Panc1 (cell line): ENCODE measurements at regions of chr9 and their contacts with region 1.

Region 1: GRCh38 chr9:37913480-37914153 is 9.7 kb upstream of the SLC25A51 start:
- DNase-seq: peak; percentile 70
- ATAC-seq: peak; percentile 75
- H3K4me3 ChIP-seq: no peak overlapping the region
- H3K27ac ChIP-seq: no peak overlapping the region; the same call in 1 of the 2 replicates
- H3K4me1 ChIP-seq: peaks cover 34% of the 10 kb centered on the region
- H3K27me3 ChIP-seq: no peaks in the 10 kb centered on the region
- CTCF ChIP-seq: peak; percentile 90

Region 2: DNA sequence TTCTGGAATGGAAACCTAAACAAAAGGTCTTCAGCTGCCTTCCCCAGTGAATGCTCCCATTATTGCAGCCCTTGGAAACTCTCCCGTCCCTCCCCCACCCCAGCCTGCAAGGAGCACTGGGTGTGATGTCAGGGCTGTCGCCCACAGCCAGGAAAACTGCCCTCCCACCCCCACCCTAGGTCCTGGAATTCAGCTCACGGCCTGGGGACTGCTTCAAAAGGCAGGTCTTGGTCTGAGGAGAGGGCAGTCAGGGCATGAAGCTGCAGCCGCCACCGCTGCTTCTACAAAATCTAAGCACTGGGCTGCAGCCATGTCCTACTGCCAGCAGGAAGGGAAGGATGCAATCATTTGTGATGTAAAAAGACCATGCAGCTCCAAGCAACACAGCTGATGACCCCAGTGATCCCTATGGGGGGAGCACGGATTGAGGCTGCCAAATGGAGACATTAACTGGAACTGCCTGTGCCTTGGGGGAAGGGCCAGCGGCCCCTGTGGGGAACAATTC is 479.7 kb before region 1 on chr9:
- CTCF ChIA-PET with region 1: no interaction called
- POLR2A ChIA-PET with region 1: no interaction called
- in situ Hi-C with region 1: no loop called
- intact Hi-C with region 1: no loop called
- DNase-seq: no peak
- ATAC-seq: no peak
- H3K4me3 ChIP-seq: no peak overlapping the region
- H3K27ac ChIP-seq: no peak overlapping the region
- H3K4me1 ChIP-seq: peaks cover 19% of the 10 kb centered on the region
- H3K27me3 ChIP-seq: no peaks in the 10 kb centered on the region
- CTCF ChIP-seq: no peak

Region 3: DNA sequence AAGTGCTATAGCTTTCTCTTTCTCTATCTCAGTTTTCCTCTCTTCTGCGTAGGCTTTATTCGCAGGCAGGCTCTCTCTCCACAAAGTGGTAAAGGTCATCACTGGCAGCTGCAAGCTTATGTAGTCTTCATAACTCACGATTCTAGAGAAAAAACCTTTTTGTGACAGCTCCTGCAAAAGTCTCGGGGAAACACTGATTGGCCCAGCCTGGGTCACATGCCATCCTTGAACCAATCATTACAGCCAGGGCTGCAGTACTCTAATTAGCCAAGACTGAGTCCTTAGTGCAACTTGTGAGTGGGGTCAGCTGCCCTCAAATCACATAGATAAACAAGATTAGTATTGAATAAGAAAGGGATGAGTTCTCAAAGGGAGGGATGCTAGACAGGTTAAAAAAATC is 281.1 kb before region 1 on chr9:
- CTCF ChIA-PET with region 1: no interaction called
- POLR2A ChIA-PET with region 1: no interaction called
- in situ Hi-C with region 1: no loop called
- intact Hi-C with region 1: no loop called
- DNase-seq: no peak
- ATAC-seq: no peak
- H3K4me3 ChIP-seq: no peak overlapping the region
- H3K27ac ChIP-seq: no peak overlapping the region
- H3K4me1 ChIP-seq: no peaks in the 10 kb centered on the region
- H3K27me3 ChIP-seq: peaks cover 8% of the 10 kb centered on the region; the same call in 1 of the 2 replicates
- CTCF ChIP-seq: no peak

Region 4: DNA sequence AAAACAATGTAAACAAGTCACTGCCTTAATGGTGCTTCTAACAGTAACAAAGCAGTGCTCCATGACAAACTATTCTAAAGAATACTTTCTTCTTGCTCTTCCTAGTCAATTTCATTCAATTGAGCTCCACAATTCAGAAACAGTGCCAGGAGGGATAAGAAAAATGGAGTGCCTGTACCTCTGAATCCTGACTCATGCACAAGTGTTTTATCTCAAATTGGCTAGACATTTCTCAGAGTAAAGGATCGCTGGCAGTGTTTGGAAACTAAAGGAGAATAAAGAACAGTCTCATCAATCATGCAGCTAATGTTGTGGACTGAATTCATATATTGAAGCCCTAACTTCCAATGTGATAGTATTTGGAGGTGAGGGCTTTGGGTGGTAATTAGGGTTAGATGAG is 37.2 kb before region 1 on chr9:
- CTCF ChIA-PET with region 1: no interaction called
- POLR2A ChIA-PET with region 1: no interaction called
- in situ Hi-C with region 1: no loop called
- intact Hi-C with region 1: no loop called
- DNase-seq: no peak
- ATAC-seq: no peak
- H3K4me3 ChIP-seq: no peak overlapping the region
- H3K27ac ChIP-seq: no peak overlapping the region
- H3K4me1 ChIP-seq: no peaks in the 10 kb centered on the region
- H3K27me3 ChIP-seq: no peaks in the 10 kb centered on the region
- CTCF ChIP-seq: no peak

Region 5: DNA sequence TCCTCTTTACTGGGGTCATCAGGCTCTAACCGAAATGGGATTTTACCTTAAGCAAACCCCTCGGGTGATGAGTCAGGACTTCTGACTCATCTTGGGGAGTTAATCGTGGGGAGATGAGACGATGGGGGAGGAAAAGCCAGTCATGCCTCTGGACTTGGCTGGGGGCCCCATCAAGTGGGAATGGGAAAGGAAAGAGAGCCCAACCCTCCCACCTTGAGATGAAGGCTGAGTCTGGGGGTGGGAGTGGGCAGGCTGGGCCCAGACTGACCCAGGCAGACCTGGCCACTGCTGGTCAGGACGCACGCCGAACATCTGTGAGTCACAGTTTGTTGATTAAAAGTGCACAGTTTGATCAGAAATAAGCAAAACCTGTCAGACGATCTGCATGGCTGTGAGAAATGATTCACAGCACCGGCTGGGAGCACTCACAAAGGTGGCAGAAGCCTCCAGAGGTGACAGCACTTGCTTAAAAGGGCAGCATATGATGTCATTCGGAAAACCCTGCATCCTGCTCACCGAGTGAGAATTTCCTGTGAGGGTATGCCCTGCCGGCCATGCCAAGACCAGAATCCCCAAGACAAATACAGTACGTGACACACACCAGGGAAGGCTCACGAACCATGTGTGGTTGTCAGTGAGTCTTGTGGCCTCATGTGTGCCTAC is 40.3 kb after region 1 on chr9:
- CTCF ChIA-PET with region 1: no interaction called
- POLR2A ChIA-PET with region 1: no interaction called
- in situ Hi-C with region 1: no loop called
- intact Hi-C with region 1: no loop called
- DNase-seq: peak; percentile 73
- ATAC-seq: peak; percentile 70
- H3K4me3 ChIP-seq: no peak overlapping the region
- H3K27ac ChIP-seq: peak overlapping the region; percentile 56
- H3K4me1 ChIP-seq: peaks cover 32% of the 10 kb centered on the region
- H3K27me3 ChIP-seq: no peaks in the 10 kb centered on the region
- CTCF ChIP-seq: no peak

Region 6: GRCh38 chr9:38032266-38033110 is 118.9 kb after region 1 on chr9:
- CTCF ChIA-PET with region 1: no interaction called
- POLR2A ChIA-PET with region 1: no interaction called
- in situ Hi-C with region 1: no loop called
- intact Hi-C with region 1: loop called (anchors 5 kb)
- DNase-seq: no peak
- ATAC-seq: peak; percentile 19
- H3K4me3 ChIP-seq: peak overlapping the region in 1 of 2 experiments; percentile 11; a peak in 1 of 4 replicates
- H3K27ac ChIP-seq: peak overlapping the region; percentile 93
- H3K4me1 ChIP-seq: peaks cover 93% of the 10 kb centered on the region
- H3K27me3 ChIP-seq: no peaks in the 10 kb centered on the region
- CTCF ChIP-seq: no peak

Region 7: DNA sequence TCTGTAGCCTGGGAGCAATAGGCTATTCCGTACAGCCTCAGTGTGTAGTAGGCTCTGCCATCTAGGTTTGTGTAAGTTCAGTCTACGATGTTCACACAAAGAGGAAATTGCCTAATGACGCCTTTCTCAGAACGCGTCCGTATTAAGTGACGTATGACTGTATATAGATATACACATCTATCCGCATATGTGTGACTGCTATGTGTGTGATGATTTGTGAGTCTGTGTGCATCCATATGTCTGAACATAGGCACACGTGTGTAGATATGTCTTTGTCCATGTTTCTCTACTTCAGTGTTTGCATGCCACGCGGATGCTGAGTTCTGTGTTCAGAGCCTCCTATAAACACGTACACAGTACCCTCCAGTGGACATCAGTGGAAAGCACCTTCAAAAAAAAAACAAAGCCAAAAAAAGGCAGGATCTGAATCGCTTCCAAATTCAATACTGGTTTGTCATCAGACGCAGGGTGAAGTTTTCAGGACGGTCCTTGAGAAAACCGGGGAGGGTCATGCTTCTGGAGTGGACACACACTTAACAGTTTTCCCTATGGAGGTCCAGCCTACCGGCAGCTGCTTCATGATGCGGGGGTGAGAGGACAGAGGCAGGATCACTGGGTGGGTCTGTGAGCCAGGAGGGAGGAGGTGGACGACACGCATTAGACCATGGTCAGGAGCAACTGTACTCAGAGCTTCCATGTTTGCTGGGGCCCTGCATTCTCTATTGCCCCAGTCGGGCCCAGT is 449.4 kb after region 1 on chr9:
- CTCF ChIA-PET with region 1: no interaction called
- POLR2A ChIA-PET with region 1: no interaction called
- in situ Hi-C with region 1: no loop called
- intact Hi-C with region 1: loop called (anchors 5 kb)
- DNase-seq: peak; percentile 36
- ATAC-seq: peak; percentile 67
- H3K4me3 ChIP-seq: peak overlapping the region in 1 of 2 experiments; percentile 5; a peak in 1 of 4 replicates
- H3K27ac ChIP-seq: no peak overlapping the region
- H3K4me1 ChIP-seq: peaks cover 2% of the 10 kb centered on the region; the same call in 1 of the 2 replicates
- H3K27me3 ChIP-seq: no peaks in the 10 kb centered on the region
- CTCF ChIP-seq: peak; percentile 70